ENCODE measurements at regions of chr7 and their contacts with region 1.

Region 1: DNA sequence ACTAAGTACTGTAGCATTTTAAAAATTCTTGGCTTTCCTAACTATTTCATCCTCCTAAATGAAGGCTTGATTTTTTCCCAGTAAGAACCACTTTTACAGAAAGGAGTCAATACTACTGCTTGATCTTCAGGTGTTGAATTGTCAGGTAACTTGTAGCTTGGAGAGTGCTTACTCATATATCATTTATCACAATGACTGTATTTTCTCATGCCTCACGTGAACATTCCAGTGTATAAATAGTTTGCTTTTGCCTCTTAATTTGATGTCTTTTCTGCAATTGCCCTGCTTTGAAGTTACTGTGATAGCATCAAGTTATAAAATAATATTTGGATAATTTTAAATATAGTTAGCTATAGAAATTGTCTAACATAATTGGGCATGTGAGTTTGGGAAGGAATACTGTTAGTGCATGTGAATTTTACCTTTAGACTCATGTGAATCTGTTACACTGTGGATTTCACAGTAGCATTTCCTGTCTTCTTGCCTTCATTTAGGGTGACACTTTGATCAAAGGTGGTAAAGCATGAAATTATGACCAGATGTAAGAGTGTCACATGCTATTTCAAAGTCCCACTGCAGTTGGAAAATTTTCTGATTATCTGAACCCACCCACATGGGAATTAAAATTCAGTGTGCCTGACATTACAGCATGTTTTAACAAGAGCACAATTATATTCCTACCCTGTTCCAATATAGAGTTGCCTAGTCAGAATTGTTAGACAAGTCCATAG is 962.8 kb downstream of the DNAJB9 start:
- DNase-seq: no peak
- H3K4me3 ChIP-seq: no peak overlapping the region
- H3K4me3 Mint-ChIP-seq: no peak overlapping the region
- H3K27ac Mint-ChIP-seq: no peak overlapping the region
- H3K4me1 ChIP-seq: no peaks in the 10 kb centered on the region
- H3K4me1 Mint-ChIP-seq: no peaks in the 10 kb centered on the region
- H3K27me3 ChIP-seq: no peaks in the 10 kb centered on the region
- H3K27me3 Mint-ChIP-seq: no peaks in the 10 kb centered on the region
- CTCF ChIP-seq: no peak

Region 2: GRCh38 chr7:109456120-109456519 is 76.3 kb before region 1 on chr7:
- CTCF ChIA-PET with region 1: no interaction called
- POLR2A ChIA-PET with region 1: no interaction called
- intact Hi-C with region 1: loop called (anchors 1 kb)
- DNase-seq: no peak
- H3K4me3 ChIP-seq: no peak overlapping the region
- H3K4me3 Mint-ChIP-seq: no peak overlapping the region
- H3K27ac Mint-ChIP-seq: no peak overlapping the region
- H3K4me1 ChIP-seq: no peaks in the 10 kb centered on the region
- H3K4me1 Mint-ChIP-seq: no peaks in the 10 kb centered on the region
- H3K27me3 ChIP-seq: no peaks in the 10 kb centered on the region
- H3K27me3 Mint-ChIP-seq: no peaks in the 10 kb centered on the region
- CTCF ChIP-seq: no peak

Measured in Caco-2 (cell line).